Lower leg skin (tissue), 4 donors: ENCODE measurements at regions of chr6 and their contacts with region 1.

Region 1: DNA sequence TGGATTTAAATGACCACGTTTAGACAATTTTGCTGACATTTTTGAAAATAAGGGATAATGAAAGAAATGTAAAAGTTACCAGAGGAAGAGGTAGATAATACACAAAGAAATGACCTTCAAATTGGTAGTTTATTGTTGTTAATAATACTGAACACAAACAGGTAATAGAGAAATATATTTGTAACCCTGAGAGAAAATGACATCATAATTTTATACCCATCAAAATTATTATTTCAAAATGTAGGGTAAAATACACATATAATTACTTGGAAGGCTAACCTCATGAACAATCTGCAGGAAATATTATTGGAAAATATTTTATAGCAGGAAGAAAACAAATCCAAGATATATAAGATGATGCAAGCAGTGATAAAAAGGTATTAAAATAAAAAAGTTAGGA is 571.9 kb downstream of the TENT5A start:
- DNase-seq: no peak
- H3K4me3 ChIP-seq: no peak overlapping the region
- CTCF ChIP-seq: no peak
- POLR2A ChIP-seq: no peak

Region 2: GRCh38 chr6:79713701-79714322 is 1466.8 kb before region 1 on chr6:
- intact Hi-C with region 1: loop called (anchors 5 kb)
- DNase-seq: no peak
- H3K4me3 ChIP-seq: no peak overlapping the region
- CTCF ChIP-seq: no peak
- POLR2A ChIP-seq: no peak

Region 3: GRCh38 chr6:81148744-81149143 is 31.9 kb before region 1 on chr6:
- intact Hi-C with region 1: no loop called
- DNase-seq: no peak
- H3K4me3 ChIP-seq: no peak overlapping the region
- CTCF ChIP-seq: no peak
- POLR2A ChIP-seq: no peak